IMR-90 (cell line): ENCODE measurements at regions of chr11 and their contacts with region 1.

Region 1: DNA sequence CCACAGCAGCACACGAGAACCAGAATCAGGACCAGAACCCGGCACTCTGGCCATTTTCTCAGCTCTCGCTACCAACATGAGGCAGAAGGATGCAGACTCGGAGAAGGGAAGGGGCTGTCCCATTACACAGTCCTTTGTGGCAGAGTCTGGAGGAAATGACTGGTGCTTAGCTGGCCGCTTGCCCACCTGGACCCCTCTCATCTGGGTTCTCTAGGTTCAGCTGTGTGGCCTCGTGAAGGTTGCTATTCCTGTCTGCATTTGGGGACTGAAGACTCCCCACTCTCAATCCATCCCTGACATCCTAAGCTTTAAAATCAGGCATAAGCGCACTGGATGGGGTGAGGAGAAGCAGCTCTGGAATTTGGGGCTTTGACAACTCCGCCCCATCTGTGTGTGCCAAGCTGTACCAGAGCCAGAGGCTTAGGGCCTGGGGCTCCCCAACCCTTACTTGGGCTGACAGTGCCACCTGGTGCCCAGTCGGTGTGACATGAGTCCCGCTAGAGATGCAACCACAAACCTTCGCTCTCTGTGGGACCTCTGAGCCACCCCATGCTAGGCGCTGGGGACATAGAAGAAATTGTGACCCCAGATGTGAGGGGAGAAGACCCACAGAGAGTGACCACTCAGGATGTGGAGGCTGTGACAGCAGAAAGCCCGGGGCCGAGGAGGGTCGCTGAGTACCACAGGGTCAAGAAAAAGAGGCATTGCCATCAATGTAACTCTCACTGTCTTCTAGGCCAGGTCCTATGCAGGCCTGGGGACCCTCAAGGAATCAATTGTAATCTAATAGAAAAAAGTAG is 35.9 kb upstream of the FCHSD2 start:
- DNase-seq: peak; percentile 81
- ATAC-seq: peak; percentile 96
- H3K4me3 ChIP-seq: no peak overlapping the region
- H3K27ac ChIP-seq: no peak overlapping the region
- H3K4me1 ChIP-seq: peaks cover 5% of the 10 kb centered on the region
- H3K27me3 ChIP-seq: no peaks in the 10 kb centered on the region; the same call in 1 of the 2 replicates
- CTCF ChIP-seq: peak; percentile 89
- POLR2A ChIP-seq: peak; percentile 69
- RAD21 ChIP-seq: peak; percentile 98

Region 2: DNA sequence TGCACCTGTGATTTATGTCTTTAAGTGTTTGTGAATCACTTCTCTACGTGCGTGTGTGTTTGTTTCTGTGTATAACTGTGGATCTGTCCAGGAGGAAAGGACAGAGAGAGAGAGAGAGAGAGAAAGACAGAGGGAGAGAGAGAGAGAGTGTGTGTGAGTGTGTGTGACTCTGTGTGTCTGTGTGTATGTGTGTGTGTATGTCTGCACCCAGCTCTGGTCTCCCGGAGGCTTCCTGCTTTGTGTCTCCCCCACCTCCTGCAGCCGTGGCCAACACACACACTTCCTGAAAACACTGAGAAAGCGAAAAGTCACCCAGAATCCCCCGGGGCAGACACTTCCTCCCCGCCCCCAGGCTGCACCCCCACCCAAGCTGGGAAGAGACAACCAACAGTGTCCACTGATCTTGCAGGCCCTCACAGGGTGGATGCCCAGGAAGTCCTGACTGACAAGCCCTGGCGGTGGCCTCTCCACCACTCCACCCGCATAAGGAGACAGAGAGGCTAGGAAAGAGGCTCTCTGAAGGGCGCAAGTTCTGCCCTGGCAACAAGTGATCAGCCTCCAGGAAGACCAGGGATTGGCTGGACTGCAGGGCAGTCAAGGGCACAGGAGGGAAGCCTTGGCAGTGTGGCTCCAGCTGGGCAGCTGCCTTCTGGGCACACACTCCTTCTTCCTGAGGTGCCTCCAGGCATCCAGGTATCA is 455.8 kb before region 1 on chr11:
- CTCF ChIA-PET with region 1: interaction called, 5 read pairs
- POLR2A ChIA-PET with region 1: no interaction called
- dilution Hi-C with region 1: no loop called
- in situ Hi-C with region 1: loop called (anchors 5 kb)
- intact Hi-C with region 1: loop called (anchors 1 kb)
- DNase-seq: peak; percentile 89
- ATAC-seq: peak; percentile 92
- H3K4me3 ChIP-seq: peak overlapping the region; percentile 41
- H3K27ac ChIP-seq: peak overlapping the region; percentile 93
- H3K4me1 ChIP-seq: peaks cover 27% of the 10 kb centered on the region
- H3K27me3 ChIP-seq: no peaks in the 10 kb centered on the region
- CTCF ChIP-seq: no peak
- POLR2A ChIP-seq: peak; percentile 54; the same call in 1 of the 2 replicates
- RAD21 ChIP-seq: no peak

Region 3: GRCh38 chr11:72831513-72832300 is 346.3 kb before region 1 on chr11:
- CTCF ChIA-PET with region 1: interaction called, 19 read pairs
- POLR2A ChIA-PET with region 1: no interaction called
- dilution Hi-C with region 1: no loop called
- in situ Hi-C with region 1: loop called (anchors 5 kb)
- intact Hi-C with region 1: loop called (anchors 1 kb)
- DNase-seq: peak; percentile 71
- ATAC-seq: peak; percentile 94
- H3K4me3 ChIP-seq: no peak overlapping the region
- H3K27ac ChIP-seq: no peak overlapping the region
- H3K4me1 ChIP-seq: peaks cover 9% of the 10 kb centered on the region
- H3K27me3 ChIP-seq: no peaks in the 10 kb centered on the region
- CTCF ChIP-seq: peak; percentile 91
- POLR2A ChIP-seq: no peak
- RAD21 ChIP-seq: peak; percentile 96

Region 4: GRCh38 chr11:72924568-72925190 is 253.3 kb before region 1 on chr11:
- CTCF ChIA-PET with region 1: no interaction called
- POLR2A ChIA-PET with region 1: no interaction called
- dilution Hi-C with region 1: no loop called
- in situ Hi-C with region 1: no loop called
- intact Hi-C with region 1: loop called (anchors 1 kb)
- DNase-seq: peak; percentile 57
- ATAC-seq: peak; percentile 64
- H3K4me3 ChIP-seq: no peak overlapping the region
- H3K27ac ChIP-seq: no peak overlapping the region
- H3K4me1 ChIP-seq: no peaks in the 10 kb centered on the region
- H3K27me3 ChIP-seq: no peaks in the 10 kb centered on the region
- CTCF ChIP-seq: peak; percentile 63
- POLR2A ChIP-seq: no peak
- RAD21 ChIP-seq: peak; percentile 62

Region 5: GRCh38 chr11:73164803-73165540 is 13.0 kb before region 1 on chr11:
- CTCF ChIA-PET with region 1: interaction called, 10 read pairs
- POLR2A ChIA-PET with region 1: no interaction called
- dilution Hi-C with region 1: no loop called
- in situ Hi-C with region 1: no loop called
- intact Hi-C with region 1: no loop called
- DNase-seq: no peak
- ATAC-seq: no peak
- H3K4me3 ChIP-seq: no peak overlapping the region
- H3K27ac ChIP-seq: no peak overlapping the region
- H3K4me1 ChIP-seq: peaks cover 14% of the 10 kb centered on the region
- H3K27me3 ChIP-seq: no peaks in the 10 kb centered on the region
- CTCF ChIP-seq: no peak
- POLR2A ChIP-seq: no peak
- RAD21 ChIP-seq: no peak

Region 6: DNA sequence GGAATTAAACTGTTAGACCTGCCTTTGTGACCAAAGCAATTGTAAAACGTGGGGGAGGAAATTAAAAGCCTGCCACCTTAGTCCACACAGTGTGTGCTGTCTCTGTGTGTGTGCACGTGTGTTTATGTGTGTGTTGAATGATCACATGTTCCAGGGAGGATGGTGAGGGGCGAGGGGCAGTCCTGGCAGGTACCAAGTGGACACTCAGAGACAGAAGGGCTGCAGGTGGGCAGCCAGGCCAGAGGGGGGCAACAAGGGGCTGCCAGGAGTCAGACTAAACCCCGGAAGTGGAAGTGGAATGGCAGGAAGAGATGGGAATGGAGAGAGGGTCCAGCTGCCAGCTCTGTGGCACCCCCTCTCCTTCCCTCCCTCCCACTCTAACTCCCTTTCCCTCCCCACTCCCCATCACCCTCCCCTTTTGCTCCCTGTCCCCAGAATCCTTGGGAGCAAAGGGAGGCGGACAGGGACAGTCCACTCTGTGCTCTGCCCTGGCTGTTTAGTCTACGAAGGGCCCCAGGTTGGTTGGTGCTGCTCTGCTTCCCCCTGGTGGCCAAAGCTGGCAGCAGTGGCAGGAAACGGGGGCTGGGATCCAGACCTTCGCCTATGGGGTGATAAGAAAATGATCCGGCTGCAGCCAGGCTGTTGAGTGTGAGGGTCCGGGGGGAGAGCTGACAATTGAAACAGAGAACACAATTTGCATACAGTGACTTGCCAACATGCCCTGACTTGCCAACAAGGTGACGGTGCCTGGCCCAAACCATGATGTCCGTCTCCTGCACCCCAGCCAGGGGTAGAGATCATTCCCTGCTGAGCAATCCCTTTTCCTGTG is 64.5 kb after region 1 on chr11:
- CTCF ChIA-PET with region 1: interaction called, 3 read pairs
- POLR2A ChIA-PET with region 1: interaction called, 15 read pairs
- dilution Hi-C with region 1: no loop called
- in situ Hi-C with region 1: no loop called
- intact Hi-C with region 1: no loop called
- DNase-seq: peak; percentile 60
- ATAC-seq: peak; percentile 96
- H3K4me3 ChIP-seq: no peak overlapping the region
- H3K27ac ChIP-seq: peak overlapping the region; percentile 17; the same call in 1 of the 2 replicates
- H3K4me1 ChIP-seq: peaks cover 14% of the 10 kb centered on the region
- H3K27me3 ChIP-seq: 0 out of 2 replicates have a peak, but pooled peaks cover 3% of the 10 kb centered on the region
- CTCF ChIP-seq: peak; percentile 90
- POLR2A ChIP-seq: peak; percentile 47; the same call in 1 of the 2 replicates
- RAD21 ChIP-seq: peak; percentile 91